Prostate gland (tissue), 2 donors: ENCODE measurements at regions of chr10 and their contacts with region 1.

Region 1: DNA sequence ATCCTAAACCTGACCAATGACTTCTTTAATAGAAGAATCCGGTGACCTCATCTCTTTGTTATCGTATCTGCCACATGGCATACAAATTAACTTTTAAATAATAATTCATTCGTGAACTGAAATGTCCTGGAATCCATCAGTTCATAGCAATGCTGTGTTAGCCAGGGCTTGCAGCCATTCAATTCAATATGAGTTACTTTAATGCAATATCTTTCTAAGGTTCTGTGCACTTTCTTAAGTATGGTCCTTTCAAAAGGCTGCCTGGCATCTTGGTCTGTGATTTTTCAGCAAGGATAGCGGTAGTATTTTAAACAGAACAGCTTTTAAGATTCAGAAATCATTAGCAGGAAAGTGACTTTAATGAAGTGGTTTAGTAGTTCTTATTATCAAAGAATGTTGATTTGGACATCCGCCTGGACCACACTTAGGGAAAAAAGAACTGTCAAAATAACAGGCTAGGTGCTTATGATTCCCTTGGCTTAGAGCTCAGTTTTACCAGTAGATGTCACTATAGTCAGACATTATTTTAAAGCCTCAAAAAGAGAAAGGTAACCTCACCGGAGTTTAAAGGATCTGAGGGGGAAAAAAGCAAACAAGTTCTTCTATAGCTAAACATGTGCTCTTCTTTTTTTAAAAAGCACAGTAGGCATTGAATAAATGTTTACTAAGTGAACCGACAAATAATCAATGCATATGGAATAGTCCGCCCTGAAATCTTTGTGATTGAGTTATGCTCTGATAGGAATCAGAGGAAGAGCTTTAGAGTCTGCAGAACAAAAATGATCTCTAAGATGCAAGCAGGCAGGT is 22.7 kb downstream of the SLC35G1 start:
- DNase-seq: no peak
- H3K4me3 ChIP-seq: no peak overlapping the region
- H3K27ac ChIP-seq: no peak overlapping the region
- H3K4me1 ChIP-seq: no peaks in the 10 kb centered on the region
- H3K27me3 ChIP-seq: no peaks in the 10 kb centered on the region
- CTCF ChIP-seq: peak in 3 of 4 experiments; percentile 42 to 69 (median 62)
- POLR2A ChIP-seq: no peak

Region 2: DNA sequence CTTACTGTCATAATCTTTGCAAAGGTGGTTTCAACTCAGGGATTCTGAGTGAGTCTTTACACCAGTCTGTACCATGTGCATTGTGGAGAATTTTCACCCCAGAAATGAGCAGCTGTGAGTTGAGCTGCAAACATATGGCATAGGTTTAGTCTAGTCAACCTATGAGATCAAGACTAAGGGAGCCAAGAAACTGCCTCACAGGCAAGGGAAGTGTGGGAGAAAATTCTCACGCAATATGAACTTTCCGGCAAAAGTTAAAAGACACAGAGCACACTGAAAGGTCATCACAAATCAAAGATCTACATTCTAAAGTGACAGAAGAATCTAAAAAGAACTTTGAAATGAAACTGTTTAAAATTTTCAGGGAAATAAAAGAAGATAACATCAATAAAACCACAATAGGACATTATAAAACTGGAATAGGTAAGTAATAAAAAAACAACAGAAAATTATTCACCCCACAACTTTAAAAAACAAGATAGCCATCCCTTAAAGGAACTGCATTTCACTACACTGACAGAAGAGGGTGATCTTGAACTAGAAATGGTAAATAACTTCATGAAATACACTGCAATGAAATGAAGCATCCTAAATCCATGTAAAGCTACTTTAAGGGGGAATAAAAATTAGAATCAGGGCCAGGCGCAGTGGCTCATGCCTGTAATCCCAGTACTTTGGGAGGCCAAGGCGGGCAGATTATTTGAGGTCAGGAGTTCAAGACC is 95.2 kb before region 1 on chr10:
- intact Hi-C with region 1: no loop called
- DNase-seq: no peak
- H3K4me3 ChIP-seq: no peak overlapping the region
- H3K27ac ChIP-seq: no peak overlapping the region
- H3K4me1 ChIP-seq: no peaks in the 10 kb centered on the region
- H3K27me3 ChIP-seq: no peaks in the 10 kb centered on the region
- CTCF ChIP-seq: peak in 3 of 4 experiments; percentile 10 to 45 (median 40)
- POLR2A ChIP-seq: no peak

Region 3: GRCh38 chr10:94076321-94076841 is 159.9 kb after region 1 on chr10:
- intact Hi-C with region 1: loop called (anchors 5 kb)
- DNase-seq: no peak
- H3K4me3 ChIP-seq: no peak overlapping the region
- H3K27ac ChIP-seq: no peak overlapping the region
- H3K4me1 ChIP-seq: peaks cover 9% of the 10 kb centered on the region
- H3K27me3 ChIP-seq: no peaks in the 10 kb centered on the region
- CTCF ChIP-seq: peak in 2 of 4 experiments; percentile 24 to 49
- POLR2A ChIP-seq: no peak

Region 4: GRCh38 chr10:94320285-94320914 is 403.9 kb after region 1 on chr10:
- intact Hi-C with region 1: loop called (anchors 2 kb)
- DNase-seq: peak; percentile 70
- H3K4me3 ChIP-seq: no peak overlapping the region
- H3K27ac ChIP-seq: no peak overlapping the region
- H3K4me1 ChIP-seq: no peaks in the 10 kb centered on the region
- H3K27me3 ChIP-seq: no peaks in the 10 kb centered on the region
- CTCF ChIP-seq: peak; percentile 71 to 96 (median 79)
- POLR2A ChIP-seq: no peak

Region 5: DNA sequence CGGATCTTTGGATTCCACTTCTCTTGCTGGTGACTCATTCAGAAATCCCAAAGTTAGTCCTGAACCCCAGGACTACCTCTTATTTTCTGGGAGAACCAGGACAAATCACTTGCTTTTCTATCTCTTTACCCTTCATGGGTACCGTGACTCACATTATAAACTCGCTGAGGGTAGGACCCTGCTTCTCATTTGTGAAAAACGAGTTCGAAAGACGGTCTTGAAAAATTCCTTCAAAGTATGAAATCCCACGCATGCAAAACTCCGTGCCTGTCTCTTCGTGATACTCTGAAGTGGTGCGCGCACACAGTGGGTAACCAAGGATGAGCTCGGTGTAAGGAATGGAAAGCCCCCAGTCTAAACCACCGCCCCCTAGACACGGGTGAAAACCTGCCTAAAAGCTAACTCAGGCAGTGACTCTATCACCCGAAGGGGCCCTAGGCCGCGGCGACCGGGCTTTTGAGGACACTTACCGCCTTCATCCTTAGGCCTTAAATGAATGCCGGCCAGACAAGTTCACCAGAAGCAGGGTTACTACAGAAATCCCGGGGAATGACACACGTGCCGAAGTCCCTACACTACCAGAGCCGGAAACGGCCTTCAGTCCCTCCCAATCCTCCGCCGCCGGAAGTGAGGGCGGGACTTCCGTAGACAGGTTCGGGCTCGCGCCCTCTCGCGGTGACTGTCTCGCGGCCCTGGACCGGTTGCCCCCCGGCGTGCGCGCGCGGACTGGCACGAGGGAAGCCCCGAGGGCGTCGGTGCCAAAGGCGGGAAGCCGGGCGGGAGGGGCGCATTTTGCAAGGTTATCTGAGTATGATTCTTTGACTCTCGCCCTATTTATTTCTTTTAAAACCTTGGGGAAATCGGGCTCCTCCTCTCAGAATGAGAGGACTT is 446.1 kb after region 1 on chr10 and contains the start of gene NOC3L:
- intact Hi-C with region 1: loop called (anchors 2 kb)
- DNase-seq: peak; percentile 93
- H3K4me3 ChIP-seq: peak within 1 kb of the TSS; percentile 37 to 58
- H3K27ac ChIP-seq: peak within 1 kb of the TSS; percentile 18 to 39
- H3K4me1 ChIP-seq: no peaks in the 10 kb centered on the region
- H3K27me3 ChIP-seq: no peaks in the 10 kb centered on the region
- CTCF ChIP-seq: peak; percentile 84 to 96 (median 86)
- POLR2A ChIP-seq: peak; percentile 16
- total RNA-seq, gene NOC3L: 15.6 to 15.8 TPM